ENCODE measurements at regions of chr15 and their contacts with region 1.

Region 1: GRCh38 chr15:48285329-48286214 is 45.7 kb upstream of the DUT start:
- DNase-seq: peak; percentile 38
- H3K4me3 Mint-ChIP-seq: no peak overlapping the region
- H3K27ac Mint-ChIP-seq: no peak overlapping the region
- H3K4me1 Mint-ChIP-seq: peaks cover 4% of the 10 kb centered on the region
- H3K27me3 Mint-ChIP-seq: peaks cover 2% of the 10 kb centered on the region

Region 2: GRCh38 chr15:47196057-47196456 is 1089.5 kb before region 1 on chr15:
- CTCF ChIA-PET with region 1: interaction called, 22 read pairs
- POLR2A ChIA-PET with region 1: no interaction called
- intact Hi-C with region 1: loop called (anchors 1 kb)
- DNase-seq: peak; percentile 56
- H3K4me3 Mint-ChIP-seq: no peak overlapping the region
- H3K27ac Mint-ChIP-seq: no peak overlapping the region
- H3K4me1 Mint-ChIP-seq: no peaks in the 10 kb centered on the region
- H3K27me3 Mint-ChIP-seq: peaks cover 1% of the 10 kb centered on the region

Region 3: GRCh38 chr15:48112242-48112641 is 173.3 kb before region 1 on chr15:
- CTCF ChIA-PET with region 1: interaction called, 12 read pairs
- POLR2A ChIA-PET with region 1: no interaction called
- intact Hi-C with region 1: no loop called
- DNase-seq: peak; percentile 11
- H3K4me3 Mint-ChIP-seq: no peak overlapping the region
- H3K27ac Mint-ChIP-seq: no peak overlapping the region
- H3K4me1 Mint-ChIP-seq: no peaks in the 10 kb centered on the region
- H3K27me3 Mint-ChIP-seq: peaks cover 10% of the 10 kb centered on the region

Region 4: DNA sequence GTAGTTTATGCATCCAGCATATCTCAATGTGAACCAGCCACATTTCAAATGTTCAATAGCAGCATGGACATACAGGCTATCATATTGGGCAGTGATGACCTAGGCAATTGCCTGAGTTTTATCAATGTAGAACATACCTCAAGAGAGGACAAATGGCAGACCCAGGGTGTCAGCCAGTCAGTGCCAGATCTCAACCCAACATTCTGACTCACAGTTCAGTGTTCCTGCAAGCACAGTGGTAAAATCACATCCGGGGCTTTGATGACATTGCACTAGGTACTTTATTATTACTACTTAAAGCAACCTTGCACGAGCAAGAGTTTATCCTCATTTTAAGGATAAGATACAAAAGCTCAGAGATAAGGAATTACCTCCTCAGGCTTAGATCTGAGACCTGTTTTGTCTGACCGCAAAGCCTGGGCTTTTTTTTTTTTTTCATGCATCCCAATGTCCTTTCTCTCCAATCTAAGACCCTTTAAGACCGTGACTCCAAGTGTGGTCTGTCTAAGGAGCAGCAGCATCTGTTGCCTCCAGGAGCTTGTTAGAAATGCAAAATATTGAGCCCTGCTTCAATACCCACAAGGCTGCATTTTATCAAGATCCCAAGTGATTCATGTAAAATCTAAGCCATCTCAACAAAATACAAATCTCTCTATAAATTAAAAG is 19.4 kb before region 1 on chr15:
- CTCF ChIA-PET with region 1: interaction called, 17 read pairs
- POLR2A ChIA-PET with region 1: no interaction called
- intact Hi-C with region 1: no loop called
- DNase-seq: peak; percentile 12
- H3K4me3 Mint-ChIP-seq: no peak overlapping the region
- H3K27ac Mint-ChIP-seq: no peak overlapping the region
- H3K4me1 Mint-ChIP-seq: peaks cover 5% of the 10 kb centered on the region
- H3K27me3 Mint-ChIP-seq: peaks cover 4% of the 10 kb centered on the region

Region 5: DNA sequence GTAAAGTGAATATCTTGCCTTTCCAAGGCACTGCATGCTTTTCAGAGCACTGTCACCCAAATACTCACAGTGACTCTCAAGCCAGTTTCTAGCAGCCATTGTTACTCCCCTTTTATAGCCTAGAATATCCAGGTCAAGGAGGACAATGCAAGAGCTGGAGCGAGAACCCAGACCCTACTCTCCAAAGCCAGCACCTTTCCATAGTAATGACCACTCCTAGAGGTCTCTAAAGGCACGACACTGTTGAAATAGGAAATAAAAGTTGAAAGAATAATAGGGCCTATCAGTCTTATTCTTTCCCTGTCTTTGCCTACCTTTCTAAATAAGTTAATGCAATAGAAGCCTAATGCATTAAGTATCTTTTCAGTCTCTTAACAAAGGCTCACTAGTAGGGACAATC is 12.1 kb after region 1 on chr15:
- CTCF ChIA-PET with region 1: interaction called, 18 read pairs
- POLR2A ChIA-PET with region 1: no interaction called
- intact Hi-C with region 1: no loop called
- DNase-seq: no peak
- H3K4me3 Mint-ChIP-seq: no peak overlapping the region
- H3K27ac Mint-ChIP-seq: no peak overlapping the region
- H3K4me1 Mint-ChIP-seq: no peaks in the 10 kb centered on the region
- H3K27me3 Mint-ChIP-seq: no peaks in the 10 kb centered on the region

Region 6: GRCh38 chr15:48352474-48353072 is 67.0 kb after region 1 on chr15:
- CTCF ChIA-PET with region 1: interaction called, 3 read pairs
- POLR2A ChIA-PET with region 1: no interaction called
- intact Hi-C with region 1: loop called (anchors 2 kb)
- DNase-seq: peak; percentile 61
- H3K4me3 Mint-ChIP-seq: no peak overlapping the region
- H3K27ac Mint-ChIP-seq: no peak overlapping the region
- H3K4me1 Mint-ChIP-seq: no peaks in the 10 kb centered on the region
- H3K27me3 Mint-ChIP-seq: peaks cover 2% of the 10 kb centered on the region

Measured in activated CD4-positive, alpha-beta memory T cell treated with anti-CD3 and anti-CD28 coated beads for 36 hours (primary cell).